Activated CD4-positive, alpha-beta T cell treated with anti-CD3 and anti-CD28 coated beads, Interleukin-2, amount 10 ng/mL, durations not matched to agents 24 days and 14 days (primary cell): ENCODE measurements at regions of chr12 and their contacts with region 1.

Region 1: GRCh38 chr12:31325877-31326631 is at the start of gene SINHCAF:
- DNase-seq: peak; percentile 100
- H3K4me3 Mint-ChIP-seq: peak within 1 kb of the TSS; percentile 99
- H3K27ac Mint-ChIP-seq: peak within 1 kb of the TSS; percentile 100
- H3K4me1 Mint-ChIP-seq: peaks cover 30% of the 10 kb centered on the region
- H3K27me3 Mint-ChIP-seq: peaks cover 12% of the 10 kb centered on the region
- total RNA-seq, gene SINHCAF: 261 and 277 TPM in 2 replicates

Region 2: DNA sequence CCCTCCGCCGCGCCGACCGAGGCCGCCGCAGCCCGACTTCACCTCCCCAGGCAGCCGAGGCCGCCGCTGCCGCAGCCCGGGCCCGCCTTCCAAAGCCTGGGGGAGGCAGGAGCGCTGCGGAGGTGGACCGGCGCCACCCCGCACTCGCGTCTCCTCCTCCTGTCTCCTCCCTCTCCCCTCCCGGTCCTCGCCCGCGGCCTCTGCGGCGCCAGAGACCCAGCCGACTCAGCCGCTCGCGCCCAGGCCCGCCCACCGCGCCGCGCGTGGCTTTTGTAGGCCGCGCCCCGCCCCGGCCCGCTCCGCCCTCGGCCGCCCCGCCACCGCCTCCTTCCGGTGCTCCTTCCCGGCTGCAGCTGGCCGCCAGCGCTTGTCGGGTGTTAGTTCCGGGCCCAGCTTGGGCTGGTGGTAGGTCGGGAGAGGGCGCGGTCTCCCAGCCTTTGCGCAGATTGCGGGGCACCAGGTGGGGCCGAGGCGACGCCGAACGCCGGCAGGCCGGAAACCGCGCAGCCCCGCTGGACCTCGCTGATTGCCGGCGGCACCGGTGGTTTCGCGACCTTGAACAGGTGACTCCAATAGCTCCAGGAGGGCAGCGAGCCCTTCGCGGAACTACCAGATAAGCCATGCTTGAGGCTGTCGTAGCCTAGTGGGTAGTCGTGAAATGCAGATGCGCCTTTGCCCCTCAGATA is 571.2 kb before region 1 on chr12 and contains the start of gene CAPRIN2:
- intact Hi-C with region 1: loop called (anchors 2 kb)
- DNase-seq: peak; percentile 98
- H3K4me3 Mint-ChIP-seq: peak within 1 kb of the TSS; percentile 91
- H3K27ac Mint-ChIP-seq: peak within 1 kb of the TSS; percentile 75
- H3K4me1 Mint-ChIP-seq: peaks cover 22% of the 10 kb centered on the region
- H3K27me3 Mint-ChIP-seq: peaks cover 8% of the 10 kb centered on the region
- total RNA-seq, gene CAPRIN2: 8.6 and 12.2 TPM in 2 replicates

Region 3: GRCh38 chr12:31605531-31605930 is 279.5 kb after region 1 on chr12:
- intact Hi-C with region 1: no loop called
- DNase-seq: no peak
- H3K4me3 Mint-ChIP-seq: no peak overlapping the region
- H3K27ac Mint-ChIP-seq: no peak overlapping the region
- H3K4me1 Mint-ChIP-seq: no peaks in the 10 kb centered on the region
- H3K27me3 Mint-ChIP-seq: no peaks in the 10 kb centered on the region

Region 4: GRCh38 chr12:31659087-31659933 is 333.3 kb after region 1 on chr12 and contains the start of gene ETFBKMT:
- intact Hi-C with region 1: loop called (anchors 2 kb)
- DNase-seq: peak; percentile 98
- H3K4me3 Mint-ChIP-seq: peak within 1 kb of the TSS; percentile 93
- H3K27ac Mint-ChIP-seq: peak within 1 kb of the TSS; percentile 99
- H3K4me1 Mint-ChIP-seq: peaks cover 15% of the 10 kb centered on the region
- H3K27me3 Mint-ChIP-seq: no peaks in the 10 kb centered on the region
- total RNA-seq, gene ETFBKMT: 0.52 and 0.84 TPM in 2 replicates

Region 5: GRCh38 chr12:32106517-32107358 is 780.7 kb after region 1 on chr12 and contains the start of gene BICD1:
- intact Hi-C with region 1: loop called (anchors 10 kb)
- DNase-seq: peak; percentile 94
- H3K4me3 Mint-ChIP-seq: peak within 1 kb of the TSS; percentile 99
- H3K27ac Mint-ChIP-seq: peak within 1 kb of the TSS; percentile 92
- H3K4me1 Mint-ChIP-seq: peaks cover 23% of the 10 kb centered on the region
- H3K27me3 Mint-ChIP-seq: peaks cover 14% of the 10 kb centered on the region
- total RNA-seq, gene BICD1: 16.0 and 18.2 TPM in 2 replicates

Region 6: DNA sequence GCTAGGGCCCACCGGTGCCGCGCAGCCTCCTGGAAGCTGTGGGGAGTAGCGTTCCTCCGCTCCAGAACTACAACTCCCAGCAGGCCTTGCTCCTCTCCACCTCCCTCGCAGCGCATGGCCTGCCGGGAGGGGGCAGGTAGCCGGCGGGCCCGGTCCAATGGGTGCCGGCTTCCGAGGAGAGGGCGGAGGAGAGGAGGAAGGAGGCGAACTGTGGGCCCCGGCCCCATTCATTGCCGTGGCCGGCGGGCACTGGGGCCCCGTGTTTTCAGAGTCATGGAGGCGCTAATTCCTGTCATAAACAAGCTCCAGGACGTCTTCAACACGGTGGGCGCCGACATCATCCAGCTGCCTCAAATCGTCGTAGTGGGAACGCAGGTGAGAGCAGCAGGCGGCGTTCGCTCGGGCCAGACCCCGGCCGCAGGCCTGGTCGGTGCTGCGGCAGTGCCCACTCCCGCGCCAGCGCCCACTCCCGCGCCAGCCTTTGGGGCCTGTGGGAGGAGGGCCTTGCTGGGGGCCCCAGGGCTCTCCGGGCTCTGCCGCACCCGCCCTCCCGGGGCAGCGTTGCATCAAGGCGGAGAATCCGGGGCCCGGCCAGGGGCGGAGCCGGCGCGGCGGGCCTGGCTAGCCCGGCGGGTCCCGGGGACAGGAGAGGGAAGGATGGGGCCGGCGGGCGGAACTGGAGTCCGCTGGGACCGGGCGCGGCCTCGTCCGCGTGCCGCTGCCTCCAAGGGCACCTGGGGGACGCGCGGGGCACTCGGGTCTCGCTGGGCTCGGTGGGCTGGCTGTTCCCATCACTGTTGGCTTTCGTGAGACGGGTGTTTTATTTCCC is 1353.3 kb after region 1 on chr12 and contains the start of gene DNM1L:
- intact Hi-C with region 1: loop called (anchors 5 kb)
- DNase-seq: peak; percentile 98
- H3K4me3 Mint-ChIP-seq: peak within 1 kb of the TSS; percentile 88
- H3K27ac Mint-ChIP-seq: peak within 1 kb of the TSS; percentile 93
- H3K4me1 Mint-ChIP-seq: peaks cover 21% of the 10 kb centered on the region
- H3K27me3 Mint-ChIP-seq: no peaks in the 10 kb centered on the region
- total RNA-seq, gene DNM1L: 83.3 and 90.7 TPM in 2 replicates